Activated CD4-positive, alpha-beta T cell treated with anti-CD3 and anti-CD28 coated beads, Interleukin-2, amount 10 ng/mL, durations not matched to agents 24 days and 14 days (primary cell): ENCODE measurements at regions of chr10 and their contacts with region 1.

Region 1: DNA sequence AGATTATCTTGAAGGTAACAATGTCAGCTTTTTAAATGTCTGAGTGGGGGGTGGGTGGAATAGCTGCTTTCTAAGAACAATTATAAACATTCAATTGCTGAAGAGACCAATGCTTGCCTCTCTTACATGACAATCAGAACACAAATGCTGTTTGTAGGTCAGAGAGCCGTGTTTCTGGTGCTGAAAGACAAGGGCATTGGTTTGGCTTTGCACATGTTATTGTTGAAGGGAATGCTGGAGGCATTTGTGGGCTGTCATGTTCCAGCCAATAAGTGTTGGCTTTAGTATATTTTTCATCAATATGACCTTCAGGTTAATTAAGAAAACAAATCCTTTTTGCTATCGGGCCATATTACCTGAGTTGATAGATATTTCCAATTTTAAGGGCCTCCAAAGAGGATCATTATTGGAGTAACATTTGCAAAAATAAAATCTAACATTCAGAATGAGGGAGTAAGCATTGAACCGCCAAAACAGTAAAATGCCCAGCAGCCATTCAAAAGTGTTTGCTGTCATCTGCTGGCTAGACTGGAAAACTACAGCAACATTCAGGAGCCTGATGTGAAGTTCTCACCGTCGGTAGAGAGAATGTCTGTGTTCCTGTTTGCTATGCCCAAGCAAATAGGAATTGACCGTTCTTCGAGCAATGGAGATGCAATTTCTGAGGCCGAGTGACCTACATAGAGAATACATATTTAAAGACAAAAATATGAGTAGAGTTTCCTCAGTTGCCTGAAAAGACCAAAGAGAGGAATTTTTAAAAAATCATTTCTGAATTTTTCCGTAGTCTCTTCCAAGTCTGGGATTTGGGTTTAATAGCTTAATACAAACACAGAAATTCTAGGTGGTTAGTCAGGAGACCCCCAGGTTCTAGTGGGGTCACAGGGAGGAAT is 118.9 kb downstream of the APBB1IP start:
- DNase-seq: peak; percentile 80
- H3K4me3 Mint-ChIP-seq: no peak overlapping the region
- H3K27ac Mint-ChIP-seq: peak overlapping the region; percentile 16
- H3K4me1 Mint-ChIP-seq: peaks cover 2% of the 10 kb centered on the region
- H3K27me3 Mint-ChIP-seq: no peaks in the 10 kb centered on the region

Region 2: DNA sequence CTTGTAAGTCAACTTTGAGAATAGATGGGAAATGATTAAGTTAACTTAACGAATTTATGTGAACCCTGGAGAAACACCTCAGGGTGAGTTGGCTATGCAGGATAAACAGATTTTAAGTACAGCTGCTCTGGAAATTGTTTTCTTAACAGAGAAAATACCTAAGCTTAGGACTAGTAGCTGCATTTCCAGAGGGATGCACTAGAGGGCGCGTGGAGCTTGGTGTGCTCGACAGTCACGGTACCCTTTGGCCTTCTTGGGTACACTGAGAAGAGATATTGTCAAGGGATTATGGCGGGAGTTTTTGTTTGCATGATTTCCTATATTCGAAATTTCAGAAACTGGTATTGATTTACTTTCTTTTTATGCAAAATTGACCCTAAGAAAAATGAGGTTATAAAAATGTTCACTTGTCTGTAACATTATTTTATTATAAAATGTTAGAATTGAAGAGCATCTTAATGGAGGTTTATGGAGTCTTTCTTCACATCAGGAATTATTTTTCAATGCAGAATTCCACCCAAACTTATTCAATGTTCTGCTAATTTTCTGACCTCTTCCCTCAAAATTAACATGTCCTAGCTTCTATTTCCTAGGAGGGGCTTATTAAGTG is 681.3 kb before region 1 on chr10:
- intact Hi-C with region 1: loop called (anchors 5 kb)
- DNase-seq: peak; percentile 87
- H3K4me3 Mint-ChIP-seq: no peak overlapping the region
- H3K27ac Mint-ChIP-seq: no peak overlapping the region
- H3K4me1 Mint-ChIP-seq: no peaks in the 10 kb centered on the region
- H3K27me3 Mint-ChIP-seq: no peaks in the 10 kb centered on the region

Region 3: DNA sequence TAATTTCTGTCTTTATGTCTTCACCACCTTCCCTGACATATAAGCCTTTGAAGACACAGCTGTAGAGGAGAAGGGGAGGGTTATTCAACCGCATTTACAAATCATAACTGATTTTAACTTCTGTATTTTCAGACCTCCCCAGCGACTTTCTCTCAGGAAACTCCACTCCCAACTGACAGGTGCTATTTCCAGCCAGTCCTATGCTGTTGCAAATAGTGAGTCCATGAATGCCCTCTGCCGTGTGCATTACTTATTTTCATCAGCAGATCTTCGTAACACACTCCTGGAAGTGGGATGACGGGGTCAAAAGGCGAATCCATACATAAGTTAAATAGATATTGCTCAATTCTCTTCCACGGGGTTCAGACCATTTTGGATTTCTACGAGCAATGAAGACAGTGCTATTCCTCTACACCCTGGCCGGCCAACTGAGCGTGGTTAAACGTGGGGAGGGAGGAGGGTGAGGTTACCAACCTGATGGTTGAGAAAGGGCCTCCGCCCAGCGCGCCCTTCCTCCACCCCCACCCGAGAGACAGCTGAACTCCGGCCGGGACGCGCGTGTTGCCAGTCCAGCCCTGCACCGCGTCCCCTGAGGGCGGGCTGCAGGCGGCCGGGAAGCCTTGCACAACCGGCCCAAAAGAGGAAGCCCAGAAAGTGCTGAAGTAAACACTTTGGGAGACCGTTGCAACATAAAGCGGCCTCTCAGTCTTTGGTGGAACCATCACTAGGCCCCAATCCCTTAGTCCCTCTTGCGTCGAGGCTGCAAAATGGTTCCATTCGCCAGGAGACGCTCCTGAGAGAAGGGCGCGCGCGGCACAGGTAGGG is 119.1 kb before region 1 on chr10 and contains the start of gene APBB1IP:
- intact Hi-C with region 1: loop called (anchors 10 kb)
- DNase-seq: peak; percentile 87
- H3K4me3 Mint-ChIP-seq: peak within 1 kb of the TSS; percentile 92
- H3K27ac Mint-ChIP-seq: peak within 1 kb of the TSS; percentile 95
- H3K4me1 Mint-ChIP-seq: peaks cover 37% of the 10 kb centered on the region
- H3K27me3 Mint-ChIP-seq: no peaks in the 10 kb centered on the region
- total RNA-seq, gene APBB1IP: 40.0 and 41.3 TPM in 2 replicates

Region 4: GRCh38 chr10:26468700-26469099 is 88.3 kb before region 1 on chr10:
- intact Hi-C with region 1: no loop called
- DNase-seq: peak; percentile 86
- H3K4me3 Mint-ChIP-seq: peak overlapping the region; percentile 77
- H3K27ac Mint-ChIP-seq: peak overlapping the region; percentile 81
- H3K4me1 Mint-ChIP-seq: peaks cover 59% of the 10 kb centered on the region
- H3K27me3 Mint-ChIP-seq: no peaks in the 10 kb centered on the region

Region 5: GRCh38 chr10:26543567-26544306 is 13.3 kb before region 1 on chr10:
- intact Hi-C with region 1: no loop called
- DNase-seq: no peak
- H3K4me3 Mint-ChIP-seq: no peak overlapping the region
- H3K27ac Mint-ChIP-seq: peak overlapping the region; percentile 66
- H3K4me1 Mint-ChIP-seq: peaks cover 21% of the 10 kb centered on the region
- H3K27me3 Mint-ChIP-seq: no peaks in the 10 kb centered on the region